HEK293 (cell line): ENCODE measurements at regions of chr19 and their contacts with region 1.

Region 1: GRCh38 chr19:33778089-33778791 is 18.4 kb upstream of the KCTD15 start:
- H3K4me3 ChIP-seq: no peak overlapping the region
- H3K27ac ChIP-seq: no peak overlapping the region
- H3K4me1 ChIP-seq: peaks cover 4% of the 10 kb centered on the region
- CTCF ChIP-seq: peak; percentile 100

Region 2: GRCh38 chr19:33639035-33639681 is 139.1 kb before region 1 on chr19:
- CTCF ChIA-PET with region 1: no interaction called
- POLR2A ChIA-PET with region 1: no interaction called
- H3K4me3 ChIP-seq: no peak overlapping the region
- H3K27ac ChIP-seq: peak overlapping the region; percentile 61; the same call in 1 of the 2 replicates
- H3K4me1 ChIP-seq: peaks cover 18% of the 10 kb centered on the region
- CTCF ChIP-seq: no peak

Region 3: GRCh38 chr19:33698664-33699435 is 79.4 kb before region 1 on chr19:
- CTCF ChIA-PET with region 1: no interaction called
- POLR2A ChIA-PET with region 1: no interaction called
- H3K4me3 ChIP-seq: no peak overlapping the region
- H3K27ac ChIP-seq: no peak overlapping the region
- H3K4me1 ChIP-seq: no peaks in the 10 kb centered on the region
- CTCF ChIP-seq: no peak

Region 4: DNA sequence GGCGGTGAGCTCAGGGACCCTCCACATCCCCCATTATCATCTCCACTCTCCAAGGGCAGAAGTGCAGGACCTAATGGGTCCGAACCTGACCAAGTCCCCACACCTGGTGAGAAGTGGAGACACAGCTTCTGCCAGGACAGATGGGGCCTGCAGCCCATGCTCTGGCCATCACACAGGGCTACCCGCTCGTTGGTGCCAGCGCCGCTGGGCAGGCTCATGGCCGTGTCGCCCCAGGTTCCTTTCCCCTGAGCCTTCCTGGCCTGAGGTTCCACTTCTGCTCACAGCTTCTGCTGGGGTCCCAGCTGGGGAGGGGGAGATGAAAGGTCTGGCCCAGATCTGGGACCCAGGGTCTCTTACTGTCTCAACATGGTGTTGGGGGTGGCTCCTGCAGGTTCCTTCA is 30.0 kb before region 1 on chr19:
- CTCF ChIA-PET with region 1: interaction called, 11 read pairs
- POLR2A ChIA-PET with region 1: no interaction called
- H3K4me3 ChIP-seq: no peak overlapping the region
- H3K27ac ChIP-seq: no peak overlapping the region
- H3K4me1 ChIP-seq: no peaks in the 10 kb centered on the region
- CTCF ChIP-seq: no peak

Region 5: GRCh38 chr19:33860312-33861090 is 82.3 kb after region 1 on chr19:
- CTCF ChIA-PET with region 1: interaction called, 15 read pairs
- POLR2A ChIA-PET with region 1: no interaction called
- H3K4me3 ChIP-seq: no peak overlapping the region
- H3K27ac ChIP-seq: no peak overlapping the region
- H3K4me1 ChIP-seq: 0 out of 2 replicates have a peak, but pooled peaks cover 3% of the 10 kb centered on the region
- CTCF ChIP-seq: no peak

Region 6: GRCh38 chr19:34041925-34042521 is 263.8 kb after region 1 on chr19:
- CTCF ChIA-PET with region 1: interaction called, 23 read pairs
- POLR2A ChIA-PET with region 1: no interaction called
- H3K4me3 ChIP-seq: no peak overlapping the region
- H3K27ac ChIP-seq: no peak overlapping the region
- H3K4me1 ChIP-seq: no peaks in the 10 kb centered on the region
- CTCF ChIP-seq: peak; percentile 70; the same call in 1 of the 2 replicates

Region 7: DNA sequence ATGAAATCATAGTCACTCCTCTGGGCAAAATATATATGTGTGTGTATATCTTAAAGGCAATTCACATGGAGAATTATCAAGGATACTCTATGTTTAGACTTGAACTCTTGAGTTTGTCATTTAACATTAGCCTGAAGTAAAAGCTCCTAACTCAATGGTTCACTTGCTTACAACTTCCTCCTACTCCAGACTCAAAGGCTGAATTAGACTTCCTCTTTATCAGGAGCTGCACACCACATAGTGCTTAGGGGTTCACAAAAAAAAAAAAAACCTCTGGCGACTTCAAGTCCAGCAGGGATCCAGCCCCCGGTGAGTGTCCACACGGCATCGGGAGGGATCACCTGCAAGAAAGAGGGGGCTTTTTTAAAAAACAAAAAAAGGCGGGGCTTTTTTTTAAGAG is 325.9 kb after region 1 on chr19:
- CTCF ChIA-PET with region 1: interaction called, 112 read pairs
- POLR2A ChIA-PET with region 1: no interaction called
- H3K4me3 ChIP-seq: no peak overlapping the region
- H3K27ac ChIP-seq: no peak overlapping the region
- H3K4me1 ChIP-seq: no peaks in the 10 kb centered on the region
- CTCF ChIP-seq: no peak

Region 8: GRCh38 chr19:34155686-34156085 is 377.4 kb after region 1 on chr19:
- CTCF ChIA-PET with region 1: interaction called, 10 read pairs
- POLR2A ChIA-PET with region 1: no interaction called
- H3K4me3 ChIP-seq: no peak overlapping the region
- H3K27ac ChIP-seq: no peak overlapping the region
- H3K4me1 ChIP-seq: 0 out of 2 replicates have a peak, but pooled peaks cover 2% of the 10 kb centered on the region
- CTCF ChIP-seq: no peak